Sigmoid colon (tissue), 7 donors: ENCODE measurements at regions of chr3 and their contacts with region 1.

Region 1: DNA sequence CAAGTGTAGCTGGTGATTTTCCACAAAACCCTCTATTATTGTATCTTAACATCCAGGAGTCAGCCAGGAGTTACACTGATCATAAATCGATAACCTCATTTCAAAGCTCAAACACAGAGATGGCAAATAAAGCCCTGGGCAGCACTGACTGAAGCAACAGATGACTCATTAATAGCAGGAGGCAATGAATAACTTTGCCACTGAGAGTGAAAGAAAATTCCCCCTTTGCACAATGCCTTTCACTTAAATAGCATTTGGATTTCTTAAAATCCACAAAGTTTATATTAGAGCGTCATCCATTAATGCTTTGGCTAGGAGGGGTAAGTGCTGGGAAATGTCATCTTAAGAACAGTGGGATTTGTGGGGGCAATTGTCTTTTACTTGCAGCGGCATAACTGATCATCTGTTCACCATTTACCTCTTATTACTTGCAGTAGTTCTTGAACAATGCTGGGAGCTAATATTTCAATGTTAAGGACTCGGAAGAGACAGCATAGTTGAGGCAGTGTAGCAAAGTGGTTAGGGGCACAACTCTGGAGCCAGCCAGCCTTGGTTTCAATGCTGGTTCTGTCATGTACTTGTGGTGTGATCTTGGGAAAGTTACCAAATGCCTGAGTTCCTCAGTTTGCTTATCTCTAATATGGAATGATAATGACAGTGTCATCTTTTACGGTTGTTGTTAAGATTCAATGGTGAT is 630.4 kb upstream of the TBL1XR1 start:
- DNase-seq: no peak
- H3K4me3 ChIP-seq: no peak overlapping the region
- H3K27ac ChIP-seq: peak overlapping the region; percentile 79 to 85 (median 84)
- H3K4me1 ChIP-seq: peaks cover 0 to 83% (median 68%) of the 10 kb centered on the region in 4 donors
- H3K27me3 ChIP-seq: no peaks in the 10 kb centered on the region
- CTCF ChIP-seq: no peak
- EP300 ChIP-seq: no peak
- POLR2A ChIP-seq: no peak

Region 2: DNA sequence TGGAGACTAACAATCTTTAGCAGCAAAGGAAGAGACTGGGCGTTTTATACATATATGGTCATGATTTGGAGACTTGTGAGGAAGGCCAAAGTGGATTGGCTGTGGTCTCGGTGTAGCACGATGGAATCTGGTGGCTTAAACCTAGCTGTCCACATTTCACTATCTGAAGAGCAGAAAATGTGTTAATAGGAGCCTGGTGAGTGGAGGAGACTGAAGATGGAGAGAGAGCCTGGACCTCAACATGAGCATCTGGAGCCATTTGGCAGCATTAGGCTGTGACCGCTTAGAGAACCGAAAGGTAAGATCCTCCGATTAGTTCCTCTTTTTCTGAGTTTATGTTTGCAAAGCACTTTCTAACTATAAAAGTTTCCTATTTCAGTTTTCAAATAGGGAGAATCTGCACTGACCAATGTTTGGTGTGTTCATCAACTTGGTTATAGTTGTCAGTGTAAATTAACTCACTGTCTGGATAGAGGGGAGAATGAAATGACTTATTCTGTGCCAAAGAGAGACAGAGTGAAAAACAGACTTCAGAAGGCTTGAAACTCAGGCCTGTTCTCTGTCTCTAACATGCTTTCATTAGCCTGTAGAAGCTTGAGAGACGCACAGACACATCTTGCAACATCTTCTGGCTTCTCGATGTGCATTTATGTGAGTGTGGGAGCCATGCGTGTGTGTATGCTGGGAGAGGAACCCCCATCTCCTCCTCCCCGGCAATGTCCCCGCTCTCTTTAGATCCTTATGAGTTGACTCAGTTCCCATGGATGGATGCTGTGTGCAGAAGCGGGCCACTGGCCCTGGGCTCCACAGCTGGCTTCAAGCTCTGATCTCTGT is 385.6 kb before region 1 on chr3:
- intact Hi-C with region 1: loop called (anchors 5 kb)
- DNase-seq: peak; percentile 82
- H3K4me3 ChIP-seq: peak overlapping the region; percentile 15 to 50 (median 35)
- H3K27ac ChIP-seq: peak overlapping the region; percentile 80 to 88 (median 81)
- H3K4me1 ChIP-seq: peaks cover 0 to 74% (median 57%) of the 10 kb centered on the region in 4 donors
- H3K27me3 ChIP-seq: no peaks in the 10 kb centered on the region
- CTCF ChIP-seq: no peak
- EP300 ChIP-seq: no peak
- POLR2A ChIP-seq: no peak

Region 3: GRCh38 chr3:177459401-177459800 is 368.3 kb before region 1 on chr3:
- intact Hi-C with region 1: loop called (anchors 5 kb)
- DNase-seq: no peak
- H3K4me3 ChIP-seq: no peak overlapping the region
- H3K27ac ChIP-seq: peak overlapping the region; percentile 75 to 88 (median 80)
- H3K4me1 ChIP-seq: peaks cover 0 to 61% (median 47%) of the 10 kb centered on the region in 4 donors
- H3K27me3 ChIP-seq: no peaks in the 10 kb centered on the region
- CTCF ChIP-seq: no peak
- EP300 ChIP-seq: peak in 3 of 4 donors; percentile 42 to 66 (median 44)
- POLR2A ChIP-seq: no peak

Region 4: DNA sequence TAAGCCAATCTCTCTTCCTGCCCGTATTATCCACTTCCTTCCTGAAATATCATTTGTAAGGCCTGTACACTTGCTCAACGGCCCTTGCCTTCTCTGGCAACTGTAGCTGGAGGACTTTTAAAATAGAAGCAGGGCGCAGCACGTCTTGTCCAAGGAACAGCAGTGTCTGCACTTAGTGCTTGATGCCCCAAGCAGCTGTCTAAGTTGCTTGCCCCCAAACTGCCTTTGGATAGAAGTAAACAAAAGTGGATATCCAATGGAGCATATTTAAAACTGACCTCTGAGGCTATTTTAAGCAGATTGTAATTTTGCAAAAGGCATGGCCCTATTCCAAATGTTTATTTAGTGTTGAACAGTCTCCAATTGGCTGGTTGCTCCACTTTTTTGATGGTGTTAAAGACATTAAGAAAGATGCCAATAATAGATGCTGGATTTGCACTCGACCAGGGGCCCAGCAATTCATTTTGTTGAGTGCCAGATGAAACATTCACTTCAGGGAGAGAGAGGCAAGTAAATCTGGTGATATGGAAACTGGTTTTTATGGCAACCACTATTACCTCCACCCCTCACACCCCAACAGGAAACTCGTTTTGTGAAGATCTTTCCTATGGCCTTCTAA is 103.5 kb before region 1 on chr3:
- intact Hi-C with region 1: loop called (anchors 5 kb)
- DNase-seq: peak; percentile 89
- H3K4me3 ChIP-seq: no peak overlapping the region
- H3K27ac ChIP-seq: peak overlapping the region; percentile 59 to 71 (median 68)
- H3K4me1 ChIP-seq: peaks cover 0 to 51% (median 42%) of the 10 kb centered on the region in 4 donors
- H3K27me3 ChIP-seq: no peaks in the 10 kb centered on the region
- CTCF ChIP-seq: no peak
- EP300 ChIP-seq: peak in 2 of 4 donors; percentile 34 to 52
- POLR2A ChIP-seq: no peak

Region 5: GRCh38 chr3:177781686-177782161 is 45.9 kb before region 1 on chr3:
- intact Hi-C with region 1: loop called (anchors 5 kb)
- DNase-seq: peak; percentile 82
- H3K4me3 ChIP-seq: no peak overlapping the region
- H3K27ac ChIP-seq: peak overlapping the region; percentile 69 to 79 (median 78)
- H3K4me1 ChIP-seq: peaks cover 0 to 41% (median 33%) of the 10 kb centered on the region in 4 donors
- H3K27me3 ChIP-seq: no peaks in the 10 kb centered on the region
- CTCF ChIP-seq: no peak
- EP300 ChIP-seq: peak in 2 of 4 donors; percentile 47 to 55
- POLR2A ChIP-seq: no peak

Region 6: GRCh38 chr3:178084938-178085816 is 257.5 kb after region 1 on chr3:
- intact Hi-C with region 1: loop called (anchors 10 kb)
- DNase-seq: peak; percentile 93
- H3K4me3 ChIP-seq: no peak overlapping the region
- H3K27ac ChIP-seq: peak overlapping the region; percentile 74 to 77 (median 75)
- H3K4me1 ChIP-seq: peaks cover 0 to 87% (median 41%) of the 10 kb centered on the region in 4 donors
- H3K27me3 ChIP-seq: no peaks in the 10 kb centered on the region
- CTCF ChIP-seq: no peak
- EP300 ChIP-seq: peak in 1 of 4 donors; percentile 38
- POLR2A ChIP-seq: no peak

Region 7: GRCh38 chr3:179133575-179133974 is 1305.9 kb after region 1 on chr3:
- intact Hi-C with region 1: no loop called
- DNase-seq: no peak
- H3K4me3 ChIP-seq: no peak overlapping the region
- H3K27ac ChIP-seq: no peak overlapping the region
- H3K4me1 ChIP-seq: no peaks in the 10 kb centered on the region
- H3K27me3 ChIP-seq: no peaks in the 10 kb centered on the region
- CTCF ChIP-seq: no peak
- EP300 ChIP-seq: no peak
- POLR2A ChIP-seq: no peak